Motor neuron (in vitro differentiated cells): ENCODE measurements at regions of chr15 and their contacts with region 1.

Region 1: GRCh38 chr15:92881802-92882696 is 18.1 kb upstream of the CHD2 start:
- ATAC-seq: peak; percentile 93 to 98 (median 96)
- H3K4me3 ChIP-seq: peak overlapping the region; percentile 51 to 87 (median 79)
- H3K27ac ChIP-seq: peak overlapping the region; percentile 87 to 99
- H3K4me1 ChIP-seq: peaks cover 20 to 25% of the 10 kb centered on the region in 2 donors

Region 2: DNA sequence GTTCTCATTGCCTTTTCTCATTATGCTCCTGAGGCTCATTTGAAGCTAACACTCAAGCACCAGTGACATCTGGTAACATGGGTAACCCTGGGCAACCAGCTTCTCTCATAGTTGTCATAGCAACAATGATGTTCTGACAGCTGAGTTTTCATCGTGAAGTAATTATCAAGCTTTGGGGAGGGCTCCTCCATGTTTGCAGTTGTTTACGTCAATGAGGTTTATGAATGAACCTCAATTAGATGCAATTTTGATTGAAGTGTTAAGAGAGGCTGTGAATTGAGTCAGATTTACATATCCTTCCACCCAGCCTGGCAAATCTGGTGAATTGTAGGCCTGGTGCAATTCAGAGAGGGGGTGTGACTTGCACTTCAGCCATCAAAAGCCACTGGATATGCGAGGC is 101.2 kb before region 1 on chr15:
- in situ Hi-C with region 1: no loop called
- ATAC-seq: peak in 7 of 8 experiments; percentile 54 to 95 (median 94)
- H3K4me3 ChIP-seq: no peak overlapping the region
- H3K27ac ChIP-seq: peak overlapping the region in 1 of 2 donors; percentile 26
- H3K4me1 ChIP-seq: peaks cover 3 to 12% of the 10 kb centered on the region in 2 donors

Region 3: DNA sequence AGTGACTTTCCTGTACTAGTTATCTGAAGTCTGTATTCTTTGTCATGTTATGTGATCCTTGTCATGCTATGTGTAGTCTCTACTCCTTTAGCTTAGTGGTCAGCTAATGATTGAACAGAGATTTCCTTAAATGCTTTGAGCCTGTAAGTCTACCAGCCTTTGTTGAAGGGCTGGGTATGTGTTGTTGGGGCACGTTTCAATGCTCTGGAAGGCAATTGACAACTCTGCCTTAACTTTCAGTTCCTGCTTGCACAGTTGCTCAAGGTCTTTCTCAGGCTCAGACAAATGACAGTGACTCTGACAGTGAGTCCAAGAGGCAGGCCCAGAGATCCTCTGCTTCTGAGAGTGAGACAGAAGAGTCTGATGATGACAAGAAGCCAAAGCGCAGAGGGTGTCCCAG is 107.4 kb after region 1 on chr15:
- in situ Hi-C with region 1: loop called in 1 of 9 experiments (anchors 25 kb)
- ATAC-seq: peak in 2 of 8 experiments; percentile 20 to 29
- H3K4me3 ChIP-seq: no peak overlapping the region
- H3K27ac ChIP-seq: no peak overlapping the region
- H3K4me1 ChIP-seq: no peaks in the 10 kb centered on the region

Region 4: GRCh38 chr15:93066834-93067509 is 184.9 kb after region 1 on chr15:
- in situ Hi-C with region 1: no loop called
- ATAC-seq: no peak
- H3K4me3 ChIP-seq: no peak overlapping the region
- H3K27ac ChIP-seq: no peak overlapping the region
- H3K4me1 ChIP-seq: peaks cover 68 to 75% of the 10 kb centered on the region in 2 donors